PC-3 (cell line): ENCODE measurements at regions of chr12 and their contacts with region 1.

Region 1: GRCh38 chr12:104448451-104448850 is 8.3 kb upstream of the CHST11 start:
- DNase-seq: no peak
- ATAC-seq: no peak
- H3K4me3 ChIP-seq: no peak overlapping the region
- H3K27ac ChIP-seq: no peak overlapping the region
- H3K4me1 ChIP-seq: no peaks in the 10 kb centered on the region
- H3K27me3 ChIP-seq: no peaks in the 10 kb centered on the region
- CTCF ChIP-seq: no peak

Region 2: GRCh38 chr12:104371043-104371870 is 77.2 kb before region 1 on chr12:
- CTCF ChIA-PET with region 1: no interaction called
- POLR2A ChIA-PET with region 1: no interaction called
- intact Hi-C with region 1: no loop called
- DNase-seq: peak; percentile 99
- ATAC-seq: peak; percentile 87
- H3K4me3 ChIP-seq: peak overlapping the region; percentile 39
- H3K27ac ChIP-seq: peak overlapping the region; percentile 83
- H3K4me1 ChIP-seq: peaks cover 55% of the 10 kb centered on the region
- H3K27me3 ChIP-seq: no peaks in the 10 kb centered on the region
- CTCF ChIP-seq: no peak

Region 3: DNA sequence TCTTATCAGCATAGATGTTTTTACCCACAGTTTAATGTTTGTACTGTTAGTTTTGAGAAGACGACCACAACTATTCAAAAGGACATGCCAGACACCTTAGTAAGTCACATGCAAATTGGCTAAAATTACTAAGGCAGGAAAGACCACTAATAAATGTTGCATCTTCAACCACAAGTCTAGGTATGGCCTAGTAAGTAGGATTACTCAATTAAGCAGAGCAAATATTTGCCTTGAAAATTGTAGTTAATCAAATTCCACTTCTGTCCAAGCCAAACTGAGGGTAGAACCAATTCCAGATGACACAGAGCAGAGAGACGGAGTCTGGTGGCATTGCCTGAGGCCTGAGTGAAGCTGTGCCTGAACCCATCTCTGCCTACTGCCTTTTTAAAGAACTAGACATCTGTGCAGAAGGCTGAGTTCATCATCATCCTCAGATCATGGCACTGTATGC is 21.4 kb before region 1 on chr12:
- CTCF ChIA-PET with region 1: no interaction called
- POLR2A ChIA-PET with region 1: interaction called, 18 read pairs
- intact Hi-C with region 1: no loop called
- DNase-seq: peak; percentile 89
- ATAC-seq: peak; percentile 88
- H3K4me3 ChIP-seq: no peak overlapping the region
- H3K27ac ChIP-seq: no peak overlapping the region
- H3K4me1 ChIP-seq: peaks cover 33% of the 10 kb centered on the region
- H3K27me3 ChIP-seq: no peaks in the 10 kb centered on the region
- CTCF ChIP-seq: no peak

Region 4: GRCh38 chr12:104435765-104436164 is 12.7 kb before region 1 on chr12:
- CTCF ChIA-PET with region 1: no interaction called
- POLR2A ChIA-PET with region 1: no interaction called
- intact Hi-C with region 1: loop called (anchors 2 kb)
- DNase-seq: no peak
- ATAC-seq: no peak
- H3K4me3 ChIP-seq: no peak overlapping the region
- H3K27ac ChIP-seq: no peak overlapping the region
- H3K4me1 ChIP-seq: no peaks in the 10 kb centered on the region
- H3K27me3 ChIP-seq: no peaks in the 10 kb centered on the region
- CTCF ChIP-seq: no peak

Region 5: GRCh38 chr12:104740668-104741067 is 292.2 kb after region 1 on chr12:
- CTCF ChIA-PET with region 1: no interaction called
- POLR2A ChIA-PET with region 1: no interaction called
- intact Hi-C with region 1: no loop called
- DNase-seq: no peak
- ATAC-seq: no peak
- H3K4me3 ChIP-seq: no peak overlapping the region
- H3K27ac ChIP-seq: no peak overlapping the region
- H3K4me1 ChIP-seq: no peaks in the 10 kb centered on the region
- H3K27me3 ChIP-seq: no peaks in the 10 kb centered on the region
- CTCF ChIP-seq: no peak